Activated B cell treated with CpG ODN at 0.5 μM for 24 hours (primary cell): ENCODE measurements at regions of chr1 and their contacts with region 1.

Region 1: DNA sequence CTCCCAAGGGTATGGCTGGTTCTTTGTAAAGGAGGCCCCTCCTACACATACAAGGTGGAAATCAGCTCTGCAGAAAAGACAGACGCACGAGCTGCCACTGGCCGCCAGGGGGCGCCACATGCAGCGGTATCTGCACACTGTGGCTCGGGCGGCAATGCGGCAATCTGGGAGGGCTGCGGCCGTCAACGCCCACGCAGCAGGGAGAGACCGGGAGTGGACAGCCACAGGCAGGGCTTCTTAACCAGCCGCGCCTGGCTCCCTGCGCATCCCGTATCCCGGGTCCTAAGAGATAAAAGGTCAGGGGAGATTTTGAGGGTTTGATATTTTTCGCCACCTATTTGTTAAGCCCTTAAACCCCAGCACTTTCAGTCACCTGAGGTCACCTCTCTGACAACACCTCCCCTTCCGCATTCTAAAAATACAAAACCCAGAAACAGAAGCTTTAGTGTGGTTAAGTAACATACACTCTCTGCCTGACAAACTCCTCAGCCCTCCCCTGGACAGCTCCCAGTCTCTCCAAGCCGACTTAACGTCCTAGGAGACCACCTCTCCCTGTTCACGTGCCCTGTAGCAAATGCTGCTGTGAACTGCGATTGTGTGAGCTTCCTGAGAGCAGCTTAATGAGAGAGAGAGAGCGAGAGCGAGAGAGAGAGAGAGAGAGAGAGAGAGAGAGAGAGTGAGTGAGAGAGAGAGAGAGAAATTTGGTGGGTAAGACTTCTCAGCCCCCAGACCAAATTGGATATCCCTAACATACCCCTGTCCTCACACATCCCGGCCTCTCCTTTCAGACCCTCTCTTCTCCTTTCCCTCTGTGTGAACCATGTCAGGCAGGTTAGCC is 13.5 kb upstream of the KCNA2 start:
- DNase-seq: peak; percentile 89
- ATAC-seq: peak; percentile 89
- H3K4me3 Mint-ChIP-seq: peak overlapping the region; percentile 92
- H3K27ac Mint-ChIP-seq: peak overlapping the region; percentile 87
- H3K4me1 Mint-ChIP-seq: peaks cover 25% of the 10 kb centered on the region
- H3K27me3 Mint-ChIP-seq: no peaks in the 10 kb centered on the region
- CTCF ChIP-seq: peak; percentile 93

Region 2: GRCh38 chr1:109426278-109427170 is 1193.1 kb before region 1 on chr1 and contains the start of gene PSMA5:
- CTCF ChIA-PET with region 1: no interaction called
- POLR2A ChIA-PET with region 1: no interaction called
- intact Hi-C with region 1: no loop called
- DNase-seq: peak; percentile 81
- ATAC-seq: peak; percentile 97
- H3K4me3 Mint-ChIP-seq: peak within 1 kb of the TSS; percentile 96
- H3K27ac Mint-ChIP-seq: peak within 1 kb of the TSS; percentile 97
- H3K4me1 Mint-ChIP-seq: peaks cover 37% of the 10 kb centered on the region
- H3K27me3 Mint-ChIP-seq: no peaks in the 10 kb centered on the region
- CTCF ChIP-seq: no peak
- total RNA-seq, gene PSMA5: 105 and 125 TPM in 2 replicates

Region 3: DNA sequence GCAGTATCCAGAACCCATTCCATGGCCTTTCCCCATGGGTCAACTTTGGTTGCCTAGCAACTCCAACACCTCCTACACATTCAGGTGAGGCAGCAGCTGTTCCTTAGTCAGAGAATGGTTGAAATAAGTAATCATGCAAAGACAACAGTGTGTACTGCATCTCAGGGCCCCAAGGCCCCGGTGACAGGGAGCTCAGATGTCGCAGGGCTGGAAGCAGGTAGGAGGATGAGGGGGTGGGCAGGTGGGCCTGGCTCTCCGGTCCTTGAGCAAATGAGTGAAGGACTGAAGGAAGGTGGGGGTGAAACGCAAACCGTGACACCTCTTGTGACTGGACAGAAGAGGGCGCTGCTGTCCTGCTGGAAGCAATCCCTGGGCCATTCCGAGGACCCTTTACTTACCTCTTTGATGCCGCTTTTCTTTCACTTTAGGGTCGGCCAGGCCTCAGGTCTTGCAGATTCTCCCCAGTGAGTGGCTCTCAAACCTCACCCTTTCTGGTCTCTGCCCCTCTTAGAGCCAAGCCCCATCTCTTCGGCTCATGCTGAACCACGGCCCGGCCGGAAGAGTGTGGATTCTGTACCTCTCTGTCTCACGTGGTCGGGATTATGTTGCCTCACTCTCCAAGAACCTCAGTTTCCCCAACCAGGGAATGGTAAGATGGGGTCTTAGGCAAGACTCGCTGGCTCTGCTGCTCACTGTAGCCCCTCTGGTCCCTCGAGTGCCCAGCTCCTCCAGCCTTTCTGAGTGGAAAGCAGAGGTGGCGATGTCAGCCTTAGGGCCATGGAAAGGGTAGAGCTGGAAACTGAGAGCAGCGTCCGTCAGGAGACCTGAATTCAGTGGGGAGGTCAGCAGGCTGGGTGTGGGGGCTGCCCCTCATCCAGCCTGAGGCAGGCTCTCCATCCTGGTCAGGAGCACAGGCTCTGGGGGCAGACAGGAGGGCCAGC is 95.0 kb before region 1 on chr1:
- CTCF ChIA-PET with region 1: interaction called, 4 read pairs
- POLR2A ChIA-PET with region 1: interaction called, 3 read pairs
- intact Hi-C with region 1: loop called (anchors 1 kb)
- DNase-seq: no peak
- ATAC-seq: no peak
- H3K4me3 Mint-ChIP-seq: no peak overlapping the region
- H3K27ac Mint-ChIP-seq: no peak overlapping the region
- H3K4me1 Mint-ChIP-seq: peaks cover 5% of the 10 kb centered on the region
- H3K27me3 Mint-ChIP-seq: peaks cover 34% of the 10 kb centered on the region
- CTCF ChIP-seq: no peak

Region 4: GRCh38 chr1:110605901-110606656 is 13.6 kb before region 1 on chr1 and contains the start of gene KCNA2:
- CTCF ChIA-PET with region 1: interaction called, 17 read pairs
- POLR2A ChIA-PET with region 1: interaction called, 4 read pairs
- intact Hi-C with region 1: no loop called
- DNase-seq: peak; percentile 35
- ATAC-seq: peak; percentile 57
- H3K4me3 Mint-ChIP-seq: peak within 1 kb of the TSS; percentile 85
- H3K27ac Mint-ChIP-seq: no peak within 1 kb of the TSS
- H3K4me1 Mint-ChIP-seq: peaks cover 16% of the 10 kb centered on the region
- H3K27me3 Mint-ChIP-seq: peaks cover 55% of the 10 kb centered on the region
- CTCF ChIP-seq: no peak
- total RNA-seq, gene KCNA2: 0.12 and 0.13 TPM in 2 replicates

Region 5: DNA sequence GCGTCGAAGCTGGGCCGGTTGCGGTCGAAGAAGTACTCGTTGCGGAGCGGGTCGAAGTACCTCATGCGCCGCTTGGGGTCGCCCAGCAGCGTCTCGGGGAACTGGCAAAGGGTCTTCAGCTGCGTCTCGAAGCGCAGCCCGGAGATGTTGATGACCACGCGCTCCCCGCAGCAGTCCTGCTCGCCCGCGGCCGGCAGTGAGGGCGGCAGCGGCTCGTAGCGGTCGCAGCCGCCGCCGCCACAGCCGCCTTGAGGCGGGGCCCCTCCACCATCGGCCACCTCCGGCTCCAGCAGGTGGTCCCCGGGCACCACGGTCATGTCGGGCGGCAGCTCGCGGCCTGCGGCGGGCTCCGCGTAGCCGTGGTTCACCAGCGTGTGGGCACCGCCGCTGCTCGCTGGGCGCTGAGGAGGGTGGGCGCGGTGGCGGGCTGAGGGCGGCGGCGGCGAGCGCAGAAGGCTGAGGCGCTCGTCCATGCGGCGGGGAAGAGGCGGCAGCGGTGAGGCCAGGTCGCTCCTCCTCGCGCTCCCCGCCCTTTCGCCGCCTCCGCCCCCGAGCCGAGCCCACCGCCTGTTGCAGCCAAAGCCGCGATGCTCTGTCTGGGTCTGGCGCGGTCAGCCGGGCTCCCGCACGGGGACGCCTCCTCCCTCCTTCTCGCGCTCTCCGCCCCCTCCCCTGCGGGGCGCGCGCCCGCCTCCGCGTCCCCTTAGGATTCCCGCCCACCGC is 54.9 kb after region 1 on chr1 and contains the start of gene KCNA3:
- CTCF ChIA-PET with region 1: interaction called, 6 read pairs
- POLR2A ChIA-PET with region 1: interaction called, 3 read pairs
- intact Hi-C with region 1: loop called (anchors 1 kb)
- DNase-seq: peak; percentile 68
- ATAC-seq: peak; percentile 62
- H3K4me3 Mint-ChIP-seq: peak within 1 kb of the TSS; percentile 90
- H3K27ac Mint-ChIP-seq: peak within 1 kb of the TSS; percentile 80
- H3K4me1 Mint-ChIP-seq: peaks cover 60% of the 10 kb centered on the region
- H3K27me3 Mint-ChIP-seq: no peaks in the 10 kb centered on the region
- CTCF ChIP-seq: no peak
- total RNA-seq, gene KCNA3: 15.0 and 20.0 TPM in 2 replicates

Region 6: DNA sequence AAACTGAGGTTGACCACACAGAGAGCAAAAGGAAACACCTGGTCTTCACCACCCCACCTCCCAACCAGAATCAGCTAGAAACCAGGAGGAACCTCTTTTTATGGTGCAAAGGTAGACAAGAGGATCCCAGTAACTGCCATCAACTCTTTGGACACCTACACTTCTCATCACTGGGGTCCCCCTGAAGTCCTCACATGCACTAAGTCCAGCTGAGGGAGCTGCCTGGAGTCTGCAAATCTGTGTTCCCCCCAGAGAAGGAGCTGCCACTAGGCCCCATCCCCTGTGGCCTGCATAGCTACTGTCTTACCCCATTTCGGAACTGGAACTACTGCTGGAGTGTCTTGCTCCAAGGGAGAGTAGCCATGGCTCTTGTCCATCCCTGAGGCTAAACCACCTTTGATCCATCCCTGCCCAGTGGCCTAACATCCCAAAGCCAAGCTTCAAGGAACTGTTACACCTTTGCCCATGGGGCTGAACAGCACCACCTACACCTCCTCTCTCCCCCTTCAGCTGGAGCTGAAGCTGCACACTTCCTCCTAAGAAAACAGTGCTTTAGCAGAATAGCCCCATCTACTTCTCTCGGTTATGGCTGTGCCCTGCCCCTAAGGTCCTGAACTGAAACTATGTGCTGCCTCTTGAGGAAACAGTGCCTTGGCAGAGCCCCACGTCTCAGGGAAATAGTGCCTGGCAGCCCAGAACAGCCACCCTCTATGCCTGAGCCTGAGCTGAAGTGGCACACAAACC is 167.9 kb after region 1 on chr1:
- CTCF ChIA-PET with region 1: interaction called, 98 read pairs
- POLR2A ChIA-PET with region 1: interaction called, 13 read pairs
- intact Hi-C with region 1: loop called (anchors 1 kb)
- DNase-seq: peak; percentile 49
- ATAC-seq: peak; percentile 85
- H3K4me3 Mint-ChIP-seq: peak overlapping the region; percentile 70
- H3K27ac Mint-ChIP-seq: peak overlapping the region; percentile 95
- H3K4me1 Mint-ChIP-seq: peaks cover 70% of the 10 kb centered on the region
- H3K27me3 Mint-ChIP-seq: no peaks in the 10 kb centered on the region
- CTCF ChIP-seq: no peak

Region 7: GRCh38 chr1:111334169-111334568 is 714.5 kb after region 1 on chr1:
- CTCF ChIA-PET with region 1: interaction called, 5 read pairs
- POLR2A ChIA-PET with region 1: no interaction called
- intact Hi-C with region 1: loop called (anchors 5 kb)
- DNase-seq: no peak
- ATAC-seq: peak; percentile 61
- H3K4me3 Mint-ChIP-seq: no peak overlapping the region
- H3K27ac Mint-ChIP-seq: no peak overlapping the region
- H3K4me1 Mint-ChIP-seq: peaks cover 2% of the 10 kb centered on the region
- H3K27me3 Mint-ChIP-seq: no peaks in the 10 kb centered on the region
- CTCF ChIP-seq: no peak